Esophagus squamous epithelium (tissue), 5 donors: ENCODE measurements at regions of chr3 and their contacts with region 1.

Region 1: GRCh38 chr3:43155464-43156121 is 49.7 kb upstream of the POMGNT2 start:
- DNase-seq: no peak
- H3K4me3 ChIP-seq: no peak overlapping the region
- H3K27ac ChIP-seq: peak overlapping the region in 1 of 4 donors; percentile 37
- H3K4me1 ChIP-seq: peaks cover 8 to 26% (median 10%) of the 10 kb centered on the region in 3 donors
- H3K27me3 ChIP-seq: peaks cover 0 to 13% (median 0%) of the 10 kb centered on the region in 4 donors
- CTCF ChIP-seq: peak in 5 of 6 experiments; percentile 43 to 75 (median 48)
- POLR2A ChIP-seq: no peak

Region 2: DNA sequence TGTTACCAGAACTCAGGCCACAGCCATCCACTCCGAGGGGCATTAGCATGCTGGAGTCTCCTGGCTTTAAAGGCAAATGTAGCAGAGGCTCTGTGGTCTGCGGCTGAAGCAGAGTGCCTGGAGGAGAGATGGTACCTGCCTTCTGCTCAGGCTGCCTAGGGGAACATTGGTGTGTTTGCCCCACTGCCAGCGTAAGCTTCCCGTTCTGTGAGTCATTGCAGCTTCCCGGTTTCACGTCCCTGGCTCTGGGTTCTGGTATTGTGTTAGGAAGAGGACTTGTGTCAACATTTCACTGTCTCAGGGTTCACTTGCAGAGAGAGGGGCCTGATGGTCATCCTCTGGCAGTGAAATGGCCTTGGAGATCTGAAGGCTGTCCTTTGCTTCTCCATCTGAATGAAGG is 174.7 kb before region 1 on chr3:
- intact Hi-C with region 1: loop called (anchors 10 kb)
- DNase-seq: no peak
- H3K4me3 ChIP-seq: peak overlapping the region in 3 of 4 donors; percentile 47 to 79 (median 64)
- H3K27ac ChIP-seq: peak overlapping the region; percentile 1 to 81 (median 56)
- H3K4me1 ChIP-seq: peaks cover 0 to 34% (median 8%) of the 10 kb centered on the region in 3 donors
- H3K27me3 ChIP-seq: peaks cover 0 to 62% (median 0%) of the 10 kb centered on the region in 4 donors
- CTCF ChIP-seq: no peak
- POLR2A ChIP-seq: no peak